Caco-2 (cell line): ENCODE measurements at regions of chr6 and their contacts with region 1.

Region 1: DNA sequence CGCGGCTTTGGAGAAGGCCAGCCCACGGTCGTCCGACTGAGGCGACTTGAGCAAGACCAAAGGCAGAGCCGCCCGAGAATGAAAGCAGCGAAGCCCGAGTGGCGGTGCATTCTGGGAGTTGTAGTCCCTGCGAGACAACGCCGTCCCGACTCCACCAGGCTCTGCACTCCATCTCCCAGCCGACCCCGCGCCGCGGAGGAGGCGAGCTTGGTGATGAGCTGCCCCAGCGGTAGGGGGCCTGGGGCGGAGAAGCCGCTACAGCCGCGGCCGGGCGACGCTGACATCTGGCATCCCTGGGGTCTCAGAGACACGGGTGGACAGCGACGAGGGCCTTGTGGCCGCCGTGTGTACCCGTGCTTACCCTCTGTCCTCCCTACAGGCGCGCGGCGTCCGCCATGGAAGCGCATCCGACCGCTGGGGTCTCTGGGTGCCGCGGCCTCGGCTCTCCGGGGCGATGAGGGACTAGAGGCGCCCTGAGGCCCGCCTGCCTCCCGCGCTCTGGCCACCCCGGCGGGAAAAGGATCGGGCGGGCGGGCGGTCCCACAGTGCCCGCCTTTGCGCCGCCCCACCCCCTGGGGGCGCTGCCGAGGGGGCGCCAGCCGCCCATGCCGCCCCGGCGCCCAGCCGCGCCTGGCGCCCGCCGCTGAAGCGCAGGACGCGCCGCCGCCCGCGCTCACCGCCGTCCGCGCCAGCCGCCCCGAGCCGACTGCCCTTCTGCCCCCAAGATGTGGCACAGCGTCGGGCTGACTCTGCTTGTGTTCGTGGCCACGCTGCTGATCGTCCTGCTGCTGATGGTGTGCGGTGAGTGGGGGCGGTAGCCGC is at the start of gene SMIM13:
- DNase-seq: peak; percentile 97
- H3K4me3 ChIP-seq: peak within 1 kb of the TSS; percentile 100
- H3K4me3 Mint-ChIP-seq: peak within 1 kb of the TSS; percentile 91
- H3K27ac Mint-ChIP-seq: peak within 1 kb of the TSS; percentile 97
- H3K4me1 ChIP-seq: peaks cover 29% of the 10 kb centered on the region
- H3K4me1 Mint-ChIP-seq: peaks cover 29% of the 10 kb centered on the region
- H3K27me3 ChIP-seq: no peaks in the 10 kb centered on the region
- H3K27me3 Mint-ChIP-seq: no peaks in the 10 kb centered on the region
- CTCF ChIP-seq: peak in 1 of 2 experiments; percentile 47
- total RNA-seq, gene SMIM13: 16.3 and 18.8 TPM in 2 replicates

Region 2: GRCh38 chr6:11111769-11112437 is 18.1 kb after region 1 on chr6:
- CTCF ChIA-PET with region 1: interaction called, 7 read pairs
- POLR2A ChIA-PET with region 1: interaction called, 3 read pairs
- intact Hi-C with region 1: loop called (anchors 1 kb)
- DNase-seq: peak; percentile 73 to 80
- H3K4me3 ChIP-seq: no peak overlapping the region; the same call in 1 of the 2 replicates
- H3K4me3 Mint-ChIP-seq: peak overlapping the region; percentile 62
- H3K27ac Mint-ChIP-seq: peak overlapping the region; percentile 16
- H3K4me1 ChIP-seq: peaks cover 20% of the 10 kb centered on the region
- H3K4me1 Mint-ChIP-seq: peaks cover 7% of the 10 kb centered on the region
- H3K27me3 ChIP-seq: no peaks in the 10 kb centered on the region
- H3K27me3 Mint-ChIP-seq: no peaks in the 10 kb centered on the region
- CTCF ChIP-seq: no peak

Region 3: DNA sequence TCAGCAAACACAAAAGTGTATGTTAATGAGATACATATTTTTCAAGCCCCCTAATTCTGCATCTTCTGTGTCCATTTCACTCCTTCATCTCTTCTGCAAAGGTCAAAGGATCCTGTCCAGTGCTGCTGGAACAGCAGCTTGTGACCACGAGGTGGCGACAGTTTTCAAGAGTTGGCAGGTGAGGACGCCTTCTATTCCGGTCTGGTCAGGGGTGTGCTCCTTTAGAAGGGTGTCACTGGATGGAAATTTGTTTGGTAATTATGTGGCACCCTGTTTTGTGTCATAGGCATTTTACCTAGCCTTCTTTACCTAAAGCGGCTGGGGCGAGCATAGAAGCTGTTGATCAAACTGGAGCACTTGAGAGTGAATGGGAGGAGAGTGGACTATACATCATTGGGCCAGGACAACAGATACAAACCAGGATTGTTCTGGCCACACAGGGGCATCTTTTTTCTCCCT is 50.6 kb after region 1 on chr6:
- CTCF ChIA-PET with region 1: no interaction called
- POLR2A ChIA-PET with region 1: no interaction called
- intact Hi-C with region 1: loop called (anchors 2 kb)
- DNase-seq: peak; percentile 76 to 83
- H3K4me3 ChIP-seq: no peak overlapping the region
- H3K4me3 Mint-ChIP-seq: no peak overlapping the region
- H3K27ac Mint-ChIP-seq: peak overlapping the region; percentile 31
- H3K4me1 ChIP-seq: peaks cover 10% of the 10 kb centered on the region; the same call in 1 of the 2 replicates
- H3K4me1 Mint-ChIP-seq: peaks cover 19% of the 10 kb centered on the region
- H3K27me3 ChIP-seq: no peaks in the 10 kb centered on the region
- H3K27me3 Mint-ChIP-seq: no peaks in the 10 kb centered on the region
- CTCF ChIP-seq: peak; percentile 93 to 94

Region 4: GRCh38 chr6:11270030-11271027 is 176.5 kb after region 1 on chr6:
- CTCF ChIA-PET with region 1: no interaction called
- POLR2A ChIA-PET with region 1: no interaction called
- intact Hi-C with region 1: loop called (anchors 5 kb)
- DNase-seq: peak; percentile 51 to 75
- H3K4me3 ChIP-seq: no peak overlapping the region
- H3K4me3 Mint-ChIP-seq: no peak overlapping the region
- H3K27ac Mint-ChIP-seq: peak overlapping the region; percentile 57
- H3K4me1 ChIP-seq: peaks cover 27% of the 10 kb centered on the region
- H3K4me1 Mint-ChIP-seq: peaks cover 17% of the 10 kb centered on the region
- H3K27me3 ChIP-seq: no peaks in the 10 kb centered on the region; the same call in 1 of the 2 replicates
- H3K27me3 Mint-ChIP-seq: no peaks in the 10 kb centered on the region
- CTCF ChIP-seq: no peak